Posterior cingulate gyrus (tissue), 11 donors: ENCODE measurements at regions of chrX and their contacts with region 1.

Region 1: DNA sequence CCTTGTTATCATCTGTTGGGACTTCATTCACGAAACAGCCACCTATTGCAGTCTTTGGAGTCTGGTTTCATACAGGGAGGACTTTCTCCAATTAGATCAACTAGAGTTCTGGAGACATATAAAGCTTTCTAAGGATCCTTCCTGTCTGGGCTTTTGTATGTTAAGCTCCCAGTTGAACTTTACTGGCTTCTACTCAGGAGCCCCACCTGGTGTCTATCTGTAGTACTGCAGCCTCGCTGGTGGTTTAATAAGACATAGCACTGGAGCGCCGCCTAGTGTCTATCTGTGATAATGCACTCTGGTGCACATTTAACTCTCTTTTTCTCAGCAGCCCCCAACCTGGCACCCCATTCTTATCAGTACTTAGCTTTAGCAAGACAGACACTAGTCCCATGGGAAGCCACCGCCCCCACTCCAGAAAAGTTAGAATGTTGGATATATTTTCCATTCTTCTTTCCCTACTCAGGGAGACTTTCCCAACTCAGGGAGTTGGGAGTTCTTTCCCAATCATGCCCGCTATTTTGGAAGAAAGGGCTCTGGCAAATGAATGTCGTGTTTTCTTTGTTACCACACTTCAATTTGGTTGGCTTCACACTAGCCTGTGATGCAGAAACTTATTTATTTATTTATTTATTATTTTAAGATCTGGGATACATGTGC is 36.9 kb upstream of the SYTL4 start:
- DNase-seq: peak in 7 of 10 donors; percentile 28 to 84 (median 51)

Region 2: DNA sequence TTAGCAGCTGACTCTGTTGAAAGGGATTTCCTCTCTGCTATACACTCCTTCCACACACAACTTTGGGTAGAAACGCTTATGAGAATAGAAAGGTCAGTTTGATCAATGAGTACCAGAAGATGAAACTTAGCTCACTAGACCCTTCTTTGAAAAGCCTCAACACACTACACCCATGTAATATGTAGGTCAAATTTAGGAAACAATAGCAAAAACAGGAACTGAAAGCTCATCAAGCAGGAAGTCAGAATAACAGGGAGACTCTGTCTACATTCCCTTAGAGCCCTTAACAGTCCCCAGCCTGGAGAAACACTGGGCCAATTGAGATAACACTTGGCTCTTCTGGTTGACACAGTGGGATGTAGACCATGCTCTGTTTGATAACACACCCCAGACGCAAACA is 94.1 kb before region 1 on chrX:
- intact Hi-C with region 1: loop called (anchors 5 kb)
- DNase-seq: no peak

Region 3: DNA sequence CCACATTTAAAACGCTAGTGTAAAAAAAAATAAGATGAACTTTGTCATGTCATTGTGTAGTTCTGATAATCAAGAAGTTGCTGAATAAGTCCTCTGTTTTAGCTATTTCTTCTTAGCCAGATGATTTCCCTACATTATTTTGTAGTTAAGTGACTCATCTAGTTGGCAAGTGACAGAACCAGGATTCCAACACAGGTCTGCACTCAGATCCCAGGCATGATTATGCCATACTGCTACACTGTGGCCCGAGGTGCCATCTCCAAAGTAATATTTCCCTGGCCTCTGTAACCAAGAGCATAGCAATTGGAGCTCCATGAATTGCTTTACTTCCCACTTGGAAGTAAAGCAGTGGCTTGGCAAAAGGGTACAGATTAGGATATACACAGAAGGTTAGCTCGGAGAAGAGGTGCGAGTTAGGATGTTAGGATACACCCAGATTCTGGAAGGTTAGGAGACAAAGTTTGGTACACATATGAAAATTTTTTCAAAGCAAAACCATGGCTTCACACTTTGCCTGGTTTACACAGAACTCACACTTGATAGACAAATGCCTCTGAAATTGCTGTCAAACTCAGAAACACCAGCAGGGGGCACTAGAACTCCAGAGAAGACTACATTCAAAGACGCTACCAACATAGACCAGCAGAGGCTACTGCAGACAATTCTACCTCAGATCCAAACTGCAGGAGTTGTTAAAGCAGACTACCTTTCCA is 83.4 kb before region 1 on chrX:
- intact Hi-C with region 1: loop called (anchors 1 kb)
- DNase-seq: peak in 7 of 10 donors; percentile 22 to 85 (median 58)